Left cardiac atrium (tissue), 4 donors: ENCODE measurements at regions of chr3 and their contacts with region 1.

Region 1: GRCh38 chr3:169041677-169042171 is 621.8 kb downstream of the MECOM start:
- DNase-seq: no peak
- ATAC-seq: peak; percentile 40 to 65

Region 2: GRCh38 chr3:169668957-169669681 is 627.4 kb after region 1 on chr3:
- intact Hi-C with region 1: loop called in 1 of 2 experiments (anchors 5 kb)
- DNase-seq: peak; percentile 86
- ATAC-seq: peak; percentile 97 to 98